ENCODE measurements at regions of chr9 and their contacts with region 1.

Region 1: GRCh38 chr9:38362852-38363593 is 29.5 kb upstream of the ALDH1B1 start:
- DNase-seq: peak; percentile 28 to 57
- H3K4me3 ChIP-seq: no peak overlapping the region
- H3K27ac ChIP-seq: no peak overlapping the region
- H3K4me1 ChIP-seq: no peaks in the 10 kb centered on the region
- H3K27me3 ChIP-seq: no peaks in the 10 kb centered on the region
- CTCF ChIP-seq: peak; percentile 71

Region 2: DNA sequence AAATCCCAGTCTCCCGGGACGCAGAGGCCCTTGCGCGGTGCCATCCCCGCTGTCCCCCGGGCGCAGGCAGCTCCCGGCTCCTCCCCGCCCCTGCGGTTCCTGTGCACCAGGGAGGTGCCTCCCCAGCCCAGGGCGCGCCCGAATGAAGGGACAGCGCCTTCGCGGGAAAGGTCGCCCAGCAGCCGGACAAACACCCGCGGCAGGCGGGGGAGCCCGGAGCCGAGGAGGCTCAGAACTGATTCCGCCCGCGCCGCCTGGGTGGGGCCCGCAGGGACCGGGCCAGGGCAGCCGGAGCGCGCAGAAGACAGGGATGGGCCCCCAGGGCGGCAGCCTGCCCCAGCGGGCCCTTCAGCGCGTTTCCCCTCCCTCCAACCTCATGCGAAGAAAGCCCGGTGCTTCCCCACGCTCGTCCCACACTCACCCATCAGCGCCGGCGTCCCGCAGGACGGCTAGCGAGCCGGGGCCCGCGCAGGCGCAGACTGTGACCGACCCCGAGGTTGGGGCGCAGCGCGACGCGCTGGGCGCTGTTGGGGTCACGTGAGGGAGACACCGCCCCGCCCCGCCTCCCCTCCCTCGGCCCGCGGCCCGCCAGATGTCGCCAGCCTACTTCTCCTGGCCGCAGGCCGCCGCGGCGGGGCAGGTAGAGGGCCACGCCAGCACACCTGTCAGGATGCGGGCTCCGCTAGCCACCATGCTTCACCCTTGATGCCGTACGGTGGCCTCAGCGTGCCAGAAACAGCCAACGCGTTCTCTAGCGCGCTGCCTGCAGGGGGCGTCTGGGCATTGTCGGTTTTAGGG is 459.2 kb before region 1 on chr9 and contains the start of gene SLC25A51:
- CTCF ChIA-PET with region 1: interaction called, 3 read pairs
- POLR2A ChIA-PET with region 1: no interaction called
- intact Hi-C with region 1: loop called (anchors 2 kb)
- DNase-seq: peak; percentile 74 to 90
- H3K4me3 ChIP-seq: peak within 1 kb of the TSS; percentile 76
- H3K27ac ChIP-seq: peak within 1 kb of the TSS; percentile 42
- H3K4me1 ChIP-seq: peaks cover 18% of the 10 kb centered on the region
- H3K27me3 ChIP-seq: no peaks in the 10 kb centered on the region
- CTCF ChIP-seq: peak; percentile 76; the same call in 1 of the 2 replicates
- total RNA-seq, gene SLC25A51: 12.7 and 14.9 TPM in 2 replicates

Region 3: DNA sequence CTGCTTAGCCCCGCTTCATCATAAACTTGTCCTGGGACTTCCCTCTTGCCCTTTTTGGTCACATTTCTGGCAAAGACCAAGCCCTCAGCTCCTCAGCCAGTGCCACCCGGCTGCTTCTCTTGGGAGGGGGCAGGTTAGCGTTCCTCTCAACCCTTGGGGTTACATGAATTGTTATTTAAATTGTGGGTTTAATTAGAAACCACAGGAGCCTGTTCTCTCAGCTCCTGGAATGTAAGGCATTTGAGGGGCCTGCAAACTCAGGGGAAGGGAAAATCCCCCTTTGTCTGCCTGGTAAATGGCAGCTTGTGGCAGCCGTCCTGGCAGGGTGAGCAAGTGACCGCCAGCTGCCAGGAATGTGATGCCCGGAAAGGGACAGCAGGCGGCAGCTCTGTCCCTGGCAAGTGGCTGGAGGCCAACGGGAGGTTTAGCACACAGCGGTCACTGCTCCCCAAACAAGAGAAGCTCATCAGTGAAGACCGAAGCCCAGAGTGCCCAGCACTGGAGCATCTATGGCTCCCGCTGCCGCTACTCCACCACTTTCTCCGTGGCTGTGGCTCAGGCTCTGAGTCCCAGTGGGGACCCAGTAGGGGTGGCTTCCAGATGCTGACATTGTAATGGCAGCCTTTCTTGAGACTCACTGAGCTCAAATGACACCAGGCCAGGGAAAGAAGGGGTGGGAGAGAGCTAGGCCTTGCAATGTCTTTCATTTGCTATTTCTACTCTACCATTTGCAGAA is 345.7 kb before region 1 on chr9:
- CTCF ChIA-PET with region 1: no interaction called
- POLR2A ChIA-PET with region 1: no interaction called
- intact Hi-C with region 1: loop called (anchors 1 kb)
- DNase-seq: peak; percentile 51 to 80
- H3K4me3 ChIP-seq: no peak overlapping the region
- H3K27ac ChIP-seq: peak overlapping the region; percentile 85
- H3K4me1 ChIP-seq: peaks cover 64% of the 10 kb centered on the region
- H3K27me3 ChIP-seq: no peaks in the 10 kb centered on the region
- CTCF ChIP-seq: peak; percentile 39

Region 4: GRCh38 chr9:38079461-38080031 is 283.5 kb before region 1 on chr9:
- CTCF ChIA-PET with region 1: no interaction called
- POLR2A ChIA-PET with region 1: interaction called, 16 read pairs
- intact Hi-C with region 1: no loop called
- DNase-seq: no peak
- H3K4me3 ChIP-seq: no peak overlapping the region
- H3K27ac ChIP-seq: no peak overlapping the region
- H3K4me1 ChIP-seq: peaks cover 25% of the 10 kb centered on the region
- H3K27me3 ChIP-seq: no peaks in the 10 kb centered on the region
- CTCF ChIP-seq: no peak

Region 5: DNA sequence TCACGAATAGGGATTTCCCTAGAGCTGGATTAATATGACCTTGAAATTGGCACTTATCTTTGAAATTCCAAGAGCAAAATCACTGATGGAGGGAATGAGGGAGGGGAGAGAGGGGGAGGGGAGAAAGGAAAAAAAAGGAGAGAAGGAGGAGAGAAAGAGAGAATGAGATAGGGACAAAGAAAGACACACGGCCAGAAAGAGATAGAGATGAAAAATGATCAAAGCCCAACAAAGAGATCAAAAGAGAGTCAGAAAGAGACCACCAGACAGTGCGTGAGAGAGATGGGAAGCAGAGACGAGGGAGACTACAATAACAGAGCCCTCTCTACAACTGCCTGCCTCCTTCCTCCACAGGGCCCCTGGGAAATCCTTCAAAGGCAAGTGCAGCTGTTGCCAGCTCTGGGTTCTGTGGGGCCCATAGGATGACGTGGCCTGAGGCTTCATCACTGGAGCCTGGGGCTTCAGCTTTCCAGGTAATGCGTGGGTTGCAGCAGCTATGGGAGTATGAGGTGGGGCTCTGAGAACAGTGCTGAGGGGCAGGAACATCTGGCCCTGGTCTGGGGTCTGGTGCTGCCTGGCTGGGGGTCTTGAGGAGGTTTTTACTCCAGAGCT is 235.6 kb before region 1 on chr9:
- CTCF ChIA-PET with region 1: no interaction called
- POLR2A ChIA-PET with region 1: no interaction called
- intact Hi-C with region 1: no loop called
- DNase-seq: no peak
- H3K4me3 ChIP-seq: no peak overlapping the region
- H3K27ac ChIP-seq: no peak overlapping the region
- H3K4me1 ChIP-seq: no peaks in the 10 kb centered on the region
- H3K27me3 ChIP-seq: no peaks in the 10 kb centered on the region
- CTCF ChIP-seq: no peak

Region 6: DNA sequence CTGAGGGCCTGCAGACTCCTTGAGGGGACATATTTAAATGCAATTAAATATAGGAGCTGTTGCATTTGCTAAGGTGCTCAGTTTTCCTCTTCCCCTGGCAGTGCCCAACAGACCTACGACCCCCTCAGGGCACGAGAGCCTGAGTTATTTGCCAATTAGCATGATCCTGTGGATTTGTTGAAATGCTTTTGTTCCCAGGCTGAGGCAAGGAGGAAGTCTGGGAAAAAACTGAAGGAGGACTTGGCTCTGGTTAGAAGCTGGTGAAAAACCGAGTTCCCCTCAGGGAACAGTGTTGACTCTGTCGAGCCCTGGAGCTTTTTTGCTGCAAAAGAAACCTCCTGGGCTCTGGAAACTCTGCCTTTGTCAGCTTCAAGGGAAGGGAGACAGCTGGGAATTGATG is 190.4 kb before region 1 on chr9:
- CTCF ChIA-PET with region 1: no interaction called
- POLR2A ChIA-PET with region 1: no interaction called
- intact Hi-C with region 1: loop called (anchors 5 kb)
- DNase-seq: no peak
- H3K4me3 ChIP-seq: no peak overlapping the region
- H3K27ac ChIP-seq: peak overlapping the region; percentile 100
- H3K4me1 ChIP-seq: peaks cover 21% of the 10 kb centered on the region
- H3K27me3 ChIP-seq: no peaks in the 10 kb centered on the region
- CTCF ChIP-seq: no peak

Region 7: GRCh38 chr9:38486056-38486615 is 123.1 kb after region 1 on chr9:
- CTCF ChIA-PET with region 1: no interaction called
- POLR2A ChIA-PET with region 1: no interaction called
- intact Hi-C with region 1: no loop called
- DNase-seq: no peak
- H3K4me3 ChIP-seq: no peak overlapping the region
- H3K27ac ChIP-seq: no peak overlapping the region
- H3K4me1 ChIP-seq: peaks cover 4% of the 10 kb centered on the region; the same call in 1 of the 2 replicates
- H3K27me3 ChIP-seq: no peaks in the 10 kb centered on the region
- CTCF ChIP-seq: no peak